Gastrocnemius medialis (tissue), 4 donors: ENCODE measurements at regions of chr11 and their contacts with region 1.

Region 1: GRCh38 chr11:114257621-114258558 is 38.3 kb upstream of the NNMT start:
- DNase-seq: peak; percentile 63 to 84
- ATAC-seq: peak; percentile 8 to 18
- H3K4me3 ChIP-seq: peak overlapping the region in 2 of 4 donors; percentile 17 to 26
- H3K27ac ChIP-seq: peak overlapping the region; percentile 87 to 98 (median 95)
- H3K4me1 ChIP-seq: peaks cover 67 to 89% of the 10 kb centered on the region in 2 donors
- H3K27me3 ChIP-seq: no peaks in the 10 kb centered on the region
- CTCF ChIP-seq: peak in 2 of 5 experiments; percentile 38 to 40
- POLR2A ChIP-seq: peak in 1 of 2 donors; percentile 12

Region 2: GRCh38 chr11:114197799-114198500 is 59.9 kb before region 1 on chr11:
- in situ Hi-C with region 1: no loop called
- intact Hi-C with region 1: loop called (anchors 2 kb)
- DNase-seq: peak; percentile 91 to 96
- ATAC-seq: peak; percentile 65 to 68
- H3K4me3 ChIP-seq: peak overlapping the region in 2 of 4 donors; percentile 11 to 23
- H3K27ac ChIP-seq: peak overlapping the region; percentile 90 to 99 (median 96)
- H3K4me1 ChIP-seq: peaks cover 95 to 98% of the 10 kb centered on the region in 2 donors
- H3K27me3 ChIP-seq: no peaks in the 10 kb centered on the region
- CTCF ChIP-seq: no peak
- POLR2A ChIP-seq: peak; percentile 80 to 96

Region 3: DNA sequence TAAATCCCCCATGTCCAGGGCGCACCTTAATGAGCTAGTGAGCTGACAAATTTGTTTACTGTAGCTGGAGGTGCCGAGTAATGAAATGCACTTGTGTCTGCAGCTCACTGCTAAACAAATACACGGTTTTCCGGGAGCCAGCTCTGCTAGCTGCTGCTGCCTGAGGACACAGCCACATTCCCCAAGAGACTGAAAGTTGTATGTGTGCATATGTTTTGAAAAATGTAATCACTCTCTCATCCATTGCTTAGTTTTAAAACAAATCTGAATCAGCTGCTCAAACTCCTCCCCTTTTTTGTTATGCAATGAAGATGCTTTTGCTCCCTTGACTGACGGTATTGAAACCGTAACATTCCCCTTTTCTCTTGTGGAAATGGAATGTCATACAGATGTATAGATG is 24.1 kb before region 1 on chr11:
- in situ Hi-C with region 1: no loop called
- intact Hi-C with region 1: no loop called
- DNase-seq: no peak
- ATAC-seq: no peak
- H3K4me3 ChIP-seq: no peak overlapping the region
- H3K27ac ChIP-seq: peak overlapping the region; percentile 90 to 99 (median 96)
- H3K4me1 ChIP-seq: peaks cover 97 to 100% of the 10 kb centered on the region in 2 donors
- H3K27me3 ChIP-seq: no peaks in the 10 kb centered on the region
- CTCF ChIP-seq: no peak
- POLR2A ChIP-seq: no peak